ENCODE measurements at regions of chr3 and their contacts with region 1.

Region 1: GRCh38 chr3:94272016-94272415 is 209.2 kb downstream of the NSUN3 start:
- DNase-seq: no peak
- ATAC-seq: no peak
- H3K4me3 ChIP-seq: no peak overlapping the region
- H3K27ac ChIP-seq: no peak overlapping the region
- H3K4me1 ChIP-seq: no peaks in the 10 kb centered on the region
- H3K27me3 ChIP-seq: no peaks in the 10 kb centered on the region
- CTCF ChIP-seq: no peak
- POLR2A ChIP-seq: no peak

Region 2: DNA sequence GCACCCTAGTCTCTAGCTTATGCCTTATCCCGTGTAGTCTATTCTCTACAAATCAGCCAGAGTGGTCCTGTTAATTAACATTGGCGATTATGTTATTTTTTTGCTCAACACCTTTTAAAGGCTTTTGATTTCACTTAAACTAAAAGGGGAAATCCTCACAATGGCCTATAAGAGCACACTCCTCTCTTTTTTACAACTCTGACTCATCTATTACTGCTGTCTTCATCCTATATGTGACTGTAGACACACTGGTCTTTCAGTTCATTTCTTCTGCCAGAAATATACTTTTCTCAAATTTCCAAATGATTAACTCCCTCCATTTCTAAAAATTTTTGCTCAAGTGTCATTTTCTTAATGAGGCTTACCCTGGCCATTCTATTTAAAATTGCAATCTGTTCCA is 65.7 kb before region 1 on chr3:
- intact Hi-C with region 1: no loop called
- DNase-seq: no peak
- ATAC-seq: no peak
- H3K4me3 ChIP-seq: no peak overlapping the region
- H3K27ac ChIP-seq: no peak overlapping the region
- H3K4me1 ChIP-seq: no peaks in the 10 kb centered on the region
- H3K27me3 ChIP-seq: peaks cover 0 to 5% (median 0%) of the 10 kb centered on the region in 9 donors
- CTCF ChIP-seq: no peak
- POLR2A ChIP-seq: no peak

Region 3: GRCh38 chr3:94314218-94314883 is 42.3 kb after region 1 on chr3:
- intact Hi-C with region 1: loop called in 1 of 10 experiments (anchors 2 kb)
- DNase-seq: no peak
- ATAC-seq: no peak
- H3K4me3 ChIP-seq: no peak overlapping the region
- H3K27ac ChIP-seq: no peak overlapping the region
- H3K4me1 ChIP-seq: no peaks in the 10 kb centered on the region
- H3K27me3 ChIP-seq: no peaks in the 10 kb centered on the region
- CTCF ChIP-seq: no peak
- POLR2A ChIP-seq: no peak

Region 4: DNA sequence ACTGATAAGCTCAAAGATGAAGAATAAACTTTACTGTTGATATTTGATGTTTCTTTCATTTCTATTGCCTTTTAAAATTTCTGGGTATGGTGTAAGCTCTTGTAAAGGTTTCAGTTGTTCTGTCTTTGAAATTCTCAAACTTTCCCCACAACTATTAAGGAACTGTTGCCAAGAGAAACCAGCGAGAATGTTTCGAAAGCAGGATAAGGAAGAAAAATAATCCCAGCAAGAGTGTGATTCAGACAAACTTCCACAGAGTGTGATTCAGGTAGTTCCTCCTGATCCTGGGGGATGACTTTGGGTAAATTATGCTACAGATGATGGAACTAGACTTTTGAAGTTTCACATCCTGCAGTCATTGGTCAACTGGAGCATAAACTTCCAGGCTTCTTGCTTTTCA is 422.9 kb after region 1 on chr3:
- intact Hi-C with region 1: no loop called
- DNase-seq: no peak
- ATAC-seq: no peak
- H3K4me3 ChIP-seq: no peak overlapping the region
- H3K27ac ChIP-seq: no peak overlapping the region
- H3K4me1 ChIP-seq: no peaks in the 10 kb centered on the region
- H3K27me3 ChIP-seq: no peaks in the 10 kb centered on the region
- CTCF ChIP-seq: no peak
- POLR2A ChIP-seq: no peak